ENCODE measurements at regions of chr13 and their contacts with region 1.

Region 1: DNA sequence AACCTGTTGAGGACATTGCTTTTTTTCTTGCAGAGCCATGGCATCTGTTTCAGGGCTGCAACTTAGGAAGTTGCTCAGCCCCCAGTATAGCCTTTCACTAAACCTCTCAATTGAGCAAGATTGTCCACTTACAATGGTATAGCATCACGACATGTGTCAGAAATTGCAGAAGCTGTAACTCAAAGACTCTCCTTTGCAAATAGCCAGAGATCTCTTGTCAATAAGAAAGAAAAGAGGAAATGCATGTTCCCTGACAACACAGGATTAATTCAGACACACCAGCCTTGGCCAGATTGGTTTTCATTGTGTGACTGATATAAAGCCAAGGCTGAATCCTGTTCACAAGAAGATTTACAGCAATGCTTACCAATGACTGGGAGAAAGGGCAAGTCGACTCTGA is 38.7 kb upstream of the CYSLTR2 start:
- DNase-seq: no peak
- ATAC-seq: no peak
- H3K4me3 ChIP-seq: no peak overlapping the region
- H3K27ac ChIP-seq: no peak overlapping the region
- H3K4me1 ChIP-seq: no peaks in the 10 kb centered on the region
- H3K27me3 ChIP-seq: no peaks in the 10 kb centered on the region
- CTCF ChIP-seq: no peak
- POLR2A ChIP-seq: no peak

Region 2: DNA sequence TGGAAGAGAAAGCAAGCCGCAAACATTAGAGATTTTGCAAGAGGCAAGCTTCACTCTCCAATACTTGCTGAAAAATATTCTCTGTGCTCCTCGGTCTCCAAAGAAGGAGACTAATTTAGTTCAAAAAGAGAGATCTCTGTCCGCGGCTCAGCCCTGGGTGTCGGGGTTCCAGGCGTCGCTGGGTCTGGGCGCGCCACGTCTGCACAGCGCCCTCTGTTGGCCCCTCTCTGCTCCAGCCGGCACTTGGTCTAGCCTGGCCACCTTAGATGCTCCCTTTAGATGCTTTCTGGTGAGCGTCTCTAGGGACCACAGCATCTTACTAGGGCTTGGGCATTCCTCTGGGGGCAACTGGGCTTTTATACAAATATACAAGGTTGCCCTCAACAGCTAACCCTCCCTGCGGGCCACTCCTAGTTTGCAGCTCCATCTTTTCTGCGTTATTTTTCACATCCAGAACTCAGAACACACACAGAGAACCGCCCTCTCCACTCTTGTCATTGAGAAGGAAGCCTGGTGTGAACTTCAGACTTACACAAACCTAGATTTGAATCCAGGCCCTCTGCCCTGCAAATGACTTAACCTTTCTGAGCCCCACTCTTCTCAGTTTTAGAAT is 117.0 kb after region 1 on chr13:
- intact Hi-C with region 1: loop called in 3 of 10 experiments (anchors 5 to 10 kb)
- DNase-seq: peak in 4 of 5 donors; percentile 38 to 74 (median 42)
- ATAC-seq: peak in 3 of 4 donors; percentile 53 to 75 (median 55)
- H3K4me3 ChIP-seq: peak overlapping the region in 4 of 12 donors; percentile 16 to 34 (median 24)
- H3K27ac ChIP-seq: peak overlapping the region in 1 of 12 donors; percentile 39
- H3K4me1 ChIP-seq: peaks cover 0 to 17% (median 1%) of the 10 kb centered on the region in 12 donors
- H3K27me3 ChIP-seq: no peaks in the 10 kb centered on the region
- CTCF ChIP-seq: peak; percentile 39 to 73 (median 54)
- POLR2A ChIP-seq: no peak

Measured in heart left ventricle (tissue), 16 donors.